ENCODE measurements at regions of chr1 and their contacts with region 1.

Region 1: DNA sequence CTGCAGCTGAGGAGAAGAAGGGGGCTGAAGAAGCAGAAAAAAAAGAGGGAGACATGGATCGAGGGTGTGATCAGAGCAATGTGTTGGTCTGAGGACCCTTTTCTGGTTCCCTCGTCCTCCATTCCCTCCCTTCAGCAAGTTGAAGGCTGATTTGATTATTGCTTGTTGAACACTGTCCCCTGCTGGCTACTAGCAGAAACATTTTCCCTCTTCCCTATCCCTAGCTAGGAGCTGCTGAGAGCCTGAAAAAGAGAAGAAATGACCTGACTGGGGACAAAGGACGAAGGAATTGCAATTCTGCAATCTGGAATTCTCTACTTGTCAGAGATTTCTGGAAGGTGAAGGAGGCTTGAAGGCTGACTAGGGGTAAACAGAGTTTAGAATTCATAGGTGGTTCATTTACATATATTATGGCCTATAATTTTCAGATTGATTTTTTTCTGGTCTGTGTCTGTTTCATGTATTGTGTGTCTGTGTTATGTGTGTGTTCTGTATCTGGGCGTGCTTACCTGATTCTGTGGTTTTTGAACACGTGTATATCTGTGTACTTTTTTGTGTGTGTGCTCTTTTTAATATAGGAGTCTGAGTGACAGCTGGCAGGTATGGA is 9.8 kb downstream of the NHLH1 start:
- DNase-seq: peak; percentile 80
- H3K4me3 Mint-ChIP-seq: no peak overlapping the region
- H3K27ac Mint-ChIP-seq: no peak overlapping the region
- H3K4me1 Mint-ChIP-seq: peaks cover 13% of the 10 kb centered on the region
- H3K27me3 Mint-ChIP-seq: peaks cover 13% of the 10 kb centered on the region

Region 2: DNA sequence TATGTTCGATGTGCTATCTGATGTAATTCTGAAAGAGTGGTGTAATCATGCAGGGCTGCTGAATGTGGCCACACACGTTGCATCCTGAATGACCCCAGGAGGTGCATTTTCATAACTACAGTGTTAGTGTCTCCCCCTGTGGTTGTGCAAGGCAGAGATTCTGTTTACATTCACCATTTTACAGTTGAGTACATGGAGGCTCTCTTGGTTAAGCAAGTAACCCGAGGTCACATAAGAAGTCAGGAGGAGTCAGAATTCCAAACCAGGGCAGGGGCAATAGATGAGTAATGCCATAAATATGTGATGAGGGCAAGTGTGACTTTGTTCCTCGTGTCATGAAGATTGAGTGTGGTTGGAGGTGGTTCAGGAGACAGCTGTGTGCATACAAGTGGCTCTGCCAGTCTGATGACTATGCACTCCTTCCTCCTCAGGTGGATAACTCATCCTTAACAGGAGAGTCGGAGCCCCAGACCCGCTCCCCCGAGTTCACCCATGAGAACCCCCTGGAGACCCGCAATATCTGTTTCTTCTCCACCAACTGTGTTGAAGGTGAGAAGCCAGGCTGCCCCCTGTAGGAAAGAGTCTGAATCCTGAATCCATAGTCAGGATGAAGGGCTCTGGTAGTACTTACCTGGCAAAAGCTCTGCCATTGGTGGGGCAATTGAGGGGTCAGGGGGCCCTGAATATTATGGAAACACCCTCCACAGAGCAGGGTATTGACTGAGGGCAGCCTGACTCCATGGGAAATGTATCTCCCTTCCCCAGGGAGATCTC is 251.7 kb before region 1 on chr1:
- intact Hi-C with region 1: no loop called
- DNase-seq: no peak
- H3K4me3 Mint-ChIP-seq: no peak overlapping the region
- H3K27ac Mint-ChIP-seq: no peak overlapping the region
- H3K4me1 Mint-ChIP-seq: no peaks in the 10 kb centered on the region
- H3K27me3 Mint-ChIP-seq: peaks cover 8% of the 10 kb centered on the region

Region 3: GRCh38 chr1:160291248-160292220 is 85.1 kb before region 1 on chr1:
- intact Hi-C with region 1: loop called (anchors 5 kb)
- DNase-seq: peak; percentile 90
- H3K4me3 Mint-ChIP-seq: no peak overlapping the region
- H3K27ac Mint-ChIP-seq: peak overlapping the region; percentile 73
- H3K4me1 Mint-ChIP-seq: peaks cover 2% of the 10 kb centered on the region
- H3K27me3 Mint-ChIP-seq: no peaks in the 10 kb centered on the region

Region 4: GRCh38 chr1:160354388-160354985 is 22.1 kb before region 1 on chr1:
- intact Hi-C with region 1: loop called (anchors 2 kb)
- DNase-seq: peak; percentile 70
- H3K4me3 Mint-ChIP-seq: no peak overlapping the region
- H3K27ac Mint-ChIP-seq: no peak overlapping the region
- H3K4me1 Mint-ChIP-seq: peaks cover 4% of the 10 kb centered on the region
- H3K27me3 Mint-ChIP-seq: no peaks in the 10 kb centered on the region